MCF 10A (cell line): ENCODE measurements at regions of chr2 and their contacts with region 1.

Region 1: DNA sequence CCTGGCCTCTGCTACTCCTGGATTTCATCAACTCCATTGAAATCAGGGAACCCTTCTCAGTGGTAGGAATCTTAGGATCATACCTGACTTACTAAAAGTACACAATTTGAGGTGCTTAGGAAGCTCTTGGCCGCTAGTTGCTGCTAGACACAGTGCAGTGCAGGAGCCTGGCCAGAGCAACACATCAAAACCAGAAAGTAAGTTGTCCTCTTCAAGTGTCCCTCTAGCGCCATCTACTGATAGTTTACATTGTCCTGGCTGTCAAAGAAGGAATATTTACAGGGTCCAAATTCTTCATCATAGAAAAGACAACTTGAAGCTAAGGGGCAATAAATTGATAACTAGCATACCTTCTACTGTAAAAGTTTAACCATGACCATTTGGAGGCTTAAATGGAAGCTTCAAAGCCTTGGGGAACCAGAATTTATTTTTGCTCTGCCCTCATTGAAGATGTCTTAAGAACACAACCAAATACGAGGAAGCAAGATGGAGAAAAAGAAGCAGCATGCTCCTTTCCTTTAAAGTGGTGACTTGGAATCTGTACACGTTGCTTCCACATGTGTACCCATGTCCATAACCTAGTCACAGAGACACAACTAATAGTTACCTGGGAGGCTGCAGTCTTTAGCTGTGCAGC is 889.1 kb upstream of the GCFC2 start:
- DNase-seq: peak; percentile 86
- H3K4me3 Mint-ChIP-seq: no peak overlapping the region
- H3K27ac Mint-ChIP-seq: no peak overlapping the region
- H3K4me1 Mint-ChIP-seq: no peaks in the 10 kb centered on the region
- H3K27me3 Mint-ChIP-seq: peaks cover 12% of the 10 kb centered on the region
- CTCF ChIP-seq: peak; percentile 80

Region 2: DNA sequence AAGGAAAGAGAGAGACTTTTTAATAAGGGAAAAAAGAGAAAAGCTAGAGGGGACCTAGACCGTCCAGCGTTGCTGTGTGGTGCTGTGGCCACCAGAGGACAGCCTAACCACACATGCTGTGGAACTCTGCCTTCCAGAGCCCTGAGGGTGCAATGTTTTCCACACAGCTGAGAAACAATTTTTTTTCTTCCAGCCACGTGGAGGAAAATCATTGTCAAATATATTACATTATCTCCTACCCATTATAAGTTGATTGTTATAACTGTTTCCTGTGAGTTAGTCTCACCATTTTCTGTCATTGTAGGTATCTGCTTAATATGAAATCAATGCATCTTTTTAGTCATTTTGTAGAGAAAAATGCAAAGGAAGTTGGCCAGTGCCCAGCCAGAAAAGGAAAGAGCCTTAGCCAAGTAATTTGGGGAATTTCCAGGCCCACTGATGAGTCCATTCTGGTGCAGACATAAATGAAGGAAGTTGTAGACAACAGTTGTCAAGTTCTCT is 959.2 kb before region 1 on chr2:
- CTCF ChIA-PET with region 1: interaction called, 13 read pairs
- POLR2A ChIA-PET with region 1: no interaction called
- intact Hi-C with region 1: no loop called
- DNase-seq: peak; percentile 77
- H3K4me3 Mint-ChIP-seq: no peak overlapping the region
- H3K27ac Mint-ChIP-seq: no peak overlapping the region
- H3K4me1 Mint-ChIP-seq: peaks cover 16% of the 10 kb centered on the region
- H3K27me3 Mint-ChIP-seq: peaks cover 29% of the 10 kb centered on the region
- CTCF ChIP-seq: peak; percentile 97

Region 3: GRCh38 chr2:75787532-75788132 is 812.2 kb before region 1 on chr2:
- CTCF ChIA-PET with region 1: interaction called, 37 read pairs
- POLR2A ChIA-PET with region 1: no interaction called
- intact Hi-C with region 1: loop called (anchors 1 kb)
- DNase-seq: peak; percentile 58
- H3K4me3 Mint-ChIP-seq: no peak overlapping the region
- H3K27ac Mint-ChIP-seq: peak overlapping the region; percentile 71
- H3K4me1 Mint-ChIP-seq: peaks cover 28% of the 10 kb centered on the region
- H3K27me3 Mint-ChIP-seq: no peaks in the 10 kb centered on the region
- CTCF ChIP-seq: peak; percentile 61

Region 4: GRCh38 chr2:76197842-76198448 is 401.9 kb before region 1 on chr2:
- CTCF ChIA-PET with region 1: interaction called, 43 read pairs
- POLR2A ChIA-PET with region 1: no interaction called
- intact Hi-C with region 1: loop called (anchors 1 kb)
- DNase-seq: peak; percentile 78
- H3K4me3 Mint-ChIP-seq: no peak overlapping the region
- H3K27ac Mint-ChIP-seq: no peak overlapping the region
- H3K4me1 Mint-ChIP-seq: no peaks in the 10 kb centered on the region
- H3K27me3 Mint-ChIP-seq: no peaks in the 10 kb centered on the region
- CTCF ChIP-seq: peak; percentile 56

Region 5: DNA sequence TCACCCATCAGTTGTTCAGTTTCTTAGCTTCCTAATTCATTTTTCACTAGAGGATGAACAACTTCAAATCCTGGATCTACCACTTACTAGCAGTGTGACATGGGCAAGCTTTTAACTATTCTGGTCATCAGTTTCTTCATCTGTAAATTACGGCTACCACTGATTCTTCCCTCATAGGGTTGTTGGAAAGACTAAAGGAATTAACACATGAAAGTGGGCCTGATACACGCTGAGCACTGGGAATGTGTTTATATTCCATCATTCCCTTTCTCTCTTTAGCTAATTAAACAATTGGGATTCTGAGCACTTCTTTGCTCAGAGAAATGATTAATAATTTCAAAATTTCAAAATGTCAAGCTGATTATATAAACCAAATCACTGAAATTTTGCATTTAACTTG is 26.9 kb before region 1 on chr2:
- CTCF ChIA-PET with region 1: interaction called, 12 read pairs
- POLR2A ChIA-PET with region 1: no interaction called
- intact Hi-C with region 1: no loop called
- DNase-seq: no peak
- H3K4me3 Mint-ChIP-seq: no peak overlapping the region
- H3K27ac Mint-ChIP-seq: no peak overlapping the region
- H3K4me1 Mint-ChIP-seq: peaks cover 4% of the 10 kb centered on the region
- H3K27me3 Mint-ChIP-seq: peaks cover 16% of the 10 kb centered on the region
- CTCF ChIP-seq: no peak

Region 6: GRCh38 chr2:76613330-76613729 is 13.5 kb after region 1 on chr2:
- CTCF ChIA-PET with region 1: interaction called, 11 read pairs
- POLR2A ChIA-PET with region 1: no interaction called
- intact Hi-C with region 1: no loop called
- DNase-seq: no peak
- H3K4me3 Mint-ChIP-seq: no peak overlapping the region
- H3K27ac Mint-ChIP-seq: no peak overlapping the region
- H3K4me1 Mint-ChIP-seq: no peaks in the 10 kb centered on the region
- H3K27me3 Mint-ChIP-seq: peaks cover 41% of the 10 kb centered on the region
- CTCF ChIP-seq: no peak